ENCODE measurements at regions of chrX and their contacts with region 1.

Region 1: DNA sequence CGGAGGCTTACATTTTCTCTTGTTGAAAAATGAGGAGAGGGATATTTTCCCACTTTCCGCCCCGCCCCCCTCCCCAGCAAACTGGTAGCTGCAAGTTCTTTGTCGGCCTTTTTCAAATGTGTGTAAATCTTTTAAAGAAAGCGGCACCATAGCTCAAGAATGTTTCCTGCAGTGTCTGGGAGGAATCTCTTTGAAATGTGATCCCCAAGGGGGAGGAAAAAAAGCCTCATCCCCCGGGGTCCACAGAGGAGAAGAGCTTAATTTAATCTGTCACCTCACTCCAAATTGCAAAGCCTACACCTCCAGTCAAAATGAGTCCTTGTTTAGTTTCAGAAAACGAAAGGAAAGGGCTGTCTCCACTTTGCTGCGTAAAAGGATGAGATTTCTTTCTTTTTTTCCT is 34.8 kb downstream of the ASMT start:
- DNase-seq: no peak
- H3K4me3 Mint-ChIP-seq: no peak overlapping the region
- H3K27ac Mint-ChIP-seq: no peak overlapping the region
- H3K4me1 Mint-ChIP-seq: no peaks in the 10 kb centered on the region
- H3K27me3 Mint-ChIP-seq: no peaks in the 10 kb centered on the region
- CTCF ChIP-seq: no peak

Region 2: DNA sequence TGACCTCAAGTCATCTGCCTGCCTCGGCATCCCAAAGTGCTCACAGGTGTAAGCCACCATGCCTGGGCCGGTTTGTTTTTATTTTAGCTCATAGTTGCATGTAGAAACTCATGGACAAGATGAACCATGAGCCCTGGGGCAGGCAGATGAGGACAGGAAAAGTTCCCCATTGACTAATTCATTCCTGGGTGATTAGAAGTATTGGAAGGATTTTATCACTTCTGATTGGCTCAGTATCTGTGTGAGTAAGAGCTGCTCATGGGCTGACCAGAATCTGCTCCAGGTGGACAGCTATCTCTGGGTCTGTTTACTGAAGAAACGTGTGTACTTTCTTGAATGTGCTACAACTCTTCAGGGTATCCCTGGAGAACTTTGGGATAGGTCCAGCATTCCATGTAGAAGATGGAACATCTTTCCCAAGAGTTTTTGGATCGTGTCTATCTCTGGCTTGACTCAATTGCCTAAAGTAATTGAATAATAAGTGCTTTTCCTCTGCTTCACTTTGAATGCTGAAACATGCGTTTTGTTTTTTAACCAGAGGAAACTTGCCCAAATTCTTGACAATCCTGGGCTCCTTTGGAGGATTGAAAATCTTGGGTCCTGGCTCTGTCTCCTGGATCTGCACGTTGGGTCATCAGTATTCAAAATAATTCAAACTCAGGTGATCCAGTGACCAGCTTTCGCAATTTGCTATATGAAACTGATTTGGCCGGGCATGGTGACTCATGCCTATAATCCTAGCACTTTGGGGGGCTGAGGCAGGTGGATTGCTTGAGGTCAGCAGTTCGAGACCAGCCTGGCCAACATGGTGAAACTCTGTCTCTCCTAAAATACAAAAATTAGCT is 939.8 kb after region 1 on chrX:
- CTCF ChIA-PET with region 1: no interaction called
- intact Hi-C with region 1: loop called (anchors 5 kb)
- DNase-seq: no peak
- H3K4me3 Mint-ChIP-seq: no peak overlapping the region
- H3K27ac Mint-ChIP-seq: no peak overlapping the region
- H3K4me1 Mint-ChIP-seq: peaks cover 10% of the 10 kb centered on the region
- H3K27me3 Mint-ChIP-seq: peaks cover 9% of the 10 kb centered on the region
- CTCF ChIP-seq: no peak

Region 3: GRCh38 chrX:2819345-2820135 is 1169.9 kb after region 1 on chrX:
- CTCF ChIA-PET with region 1: no interaction called
- intact Hi-C with region 1: loop called (anchors 5 kb)
- DNase-seq: peak; percentile 20
- H3K4me3 Mint-ChIP-seq: no peak overlapping the region
- H3K27ac Mint-ChIP-seq: no peak overlapping the region
- H3K4me1 Mint-ChIP-seq: no peaks in the 10 kb centered on the region
- H3K27me3 Mint-ChIP-seq: no peaks in the 10 kb centered on the region
- CTCF ChIP-seq: no peak